CD8-positive, alpha-beta memory T cell (primary cell): ENCODE measurements at regions of chr2 and their contacts with region 1.

Region 1: DNA sequence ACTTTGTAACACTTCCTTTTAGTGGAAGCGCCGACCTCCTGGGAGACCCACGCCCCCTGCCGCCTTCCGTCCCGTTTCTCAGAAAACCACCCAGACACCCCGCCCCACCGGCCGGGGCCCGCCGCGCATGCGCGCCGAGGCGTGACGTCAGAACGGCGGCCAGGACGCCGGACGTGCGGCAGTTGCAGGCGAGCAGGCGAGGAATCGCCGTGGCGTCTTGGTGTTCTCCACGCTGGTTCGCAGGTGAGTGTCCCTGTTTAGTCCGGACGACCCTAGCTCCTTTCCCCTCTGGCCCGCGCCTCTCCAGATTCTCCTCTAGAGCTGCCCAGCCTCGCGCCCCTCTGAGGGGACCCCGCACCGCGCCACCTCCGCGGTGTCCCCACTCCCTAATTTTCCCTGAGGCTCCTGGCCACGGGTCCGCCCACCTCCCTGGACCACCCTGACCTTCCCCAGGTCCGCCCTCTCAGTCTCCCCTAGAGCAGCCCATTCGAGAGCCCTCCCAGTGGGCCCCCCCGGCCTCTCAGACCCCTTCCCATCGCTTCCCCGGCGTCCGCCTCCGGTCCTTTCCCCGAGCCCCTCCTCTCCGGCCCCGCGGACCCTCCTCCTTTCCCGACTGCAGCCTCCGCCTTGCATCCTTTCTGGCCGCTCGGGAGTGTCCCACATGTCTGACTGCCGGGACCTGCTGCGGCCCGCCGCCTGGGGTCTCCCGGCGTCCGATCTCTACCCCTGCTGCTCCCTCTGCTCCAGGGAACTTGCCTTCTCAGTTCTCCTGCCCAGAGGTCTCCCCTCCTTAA is at the start of gene PLEKHB2:
- DNase-seq: peak; percentile 90 to 95 (median 93)
- H3K4me3 ChIP-seq: peak within 1 kb of the TSS; percentile 89
- H3K4me3 Mint-ChIP-seq: peak within 1 kb of the TSS; percentile 85 to 100 (median 96)
- H3K27ac ChIP-seq: peak within 1 kb of the TSS; percentile 94
- H3K27ac Mint-ChIP-seq: peak within 1 kb of the TSS; percentile 81 to 99 (median 98)
- H3K4me1 ChIP-seq: peaks cover 37% of the 10 kb centered on the region
- H3K4me1 Mint-ChIP-seq: peaks cover 47 to 59% (median 57%) of the 10 kb centered on the region in 3 donors
- H3K27me3 ChIP-seq: no peaks in the 10 kb centered on the region
- H3K27me3 Mint-ChIP-seq: peaks cover 0 to 2% of the 10 kb centered on the region in 2 donors
- total RNA-seq, gene PLEKHB2: 47.7 to 48.2 TPM

Region 2: DNA sequence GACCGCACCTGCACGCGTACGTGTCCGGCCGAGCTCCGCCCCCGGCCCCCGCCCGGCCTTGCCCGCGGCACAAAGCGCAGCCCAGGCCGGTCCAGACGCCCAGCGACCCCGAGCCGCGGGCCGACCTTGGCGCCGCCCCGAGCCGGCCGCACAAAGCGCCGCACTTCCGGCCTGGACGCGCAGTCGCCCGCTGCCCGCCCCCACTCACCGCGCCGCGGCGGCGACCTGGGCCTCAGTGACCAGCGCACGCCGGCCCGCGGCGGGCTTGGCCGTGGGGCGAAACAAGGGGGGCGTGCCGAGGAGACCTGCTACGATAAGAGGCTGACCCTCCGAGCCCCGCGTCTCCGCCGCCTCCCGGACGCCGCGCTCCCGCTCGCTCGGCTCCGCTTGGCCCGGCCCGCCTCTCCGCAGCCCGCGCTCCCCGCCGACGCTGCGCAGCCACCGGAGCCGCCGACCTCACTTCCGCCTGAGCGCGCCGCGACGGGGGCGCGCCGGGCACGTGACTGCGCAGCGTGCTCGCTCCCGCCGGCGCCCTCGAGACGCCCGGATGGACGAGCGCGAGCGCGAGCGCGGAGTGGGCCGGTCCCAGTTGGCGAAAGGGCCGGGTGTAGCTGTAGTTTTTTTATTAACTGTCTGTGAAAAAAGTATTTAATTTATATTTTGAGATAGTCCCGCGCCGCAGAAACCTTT is 12.2 kb before region 1 on chr2 and contains the start of gene FAM168B:
- CTCF ChIA-PET with region 1: interaction called, 20 read pairs
- POLR2A ChIA-PET with region 1: interaction called, 38 read pairs
- DNase-seq: peak; percentile 79 to 91 (median 88)
- H3K4me3 ChIP-seq: peak within 1 kb of the TSS; percentile 89
- H3K4me3 Mint-ChIP-seq: peak within 1 kb of the TSS; percentile 90 to 99 (median 94)
- H3K27ac ChIP-seq: peak within 1 kb of the TSS; percentile 89
- H3K27ac Mint-ChIP-seq: peak within 1 kb of the TSS; percentile 81 to 98 (median 96)
- H3K4me1 ChIP-seq: peaks cover 22% of the 10 kb centered on the region
- H3K4me1 Mint-ChIP-seq: peaks cover 20 to 36% (median 34%) of the 10 kb centered on the region in 3 donors
- H3K27me3 ChIP-seq: no peaks in the 10 kb centered on the region
- H3K27me3 Mint-ChIP-seq: peaks cover 0 to 3% of the 10 kb centered on the region in 2 donors
- total RNA-seq, gene FAM168B: 93.1 to 97.6 TPM

Region 3: DNA sequence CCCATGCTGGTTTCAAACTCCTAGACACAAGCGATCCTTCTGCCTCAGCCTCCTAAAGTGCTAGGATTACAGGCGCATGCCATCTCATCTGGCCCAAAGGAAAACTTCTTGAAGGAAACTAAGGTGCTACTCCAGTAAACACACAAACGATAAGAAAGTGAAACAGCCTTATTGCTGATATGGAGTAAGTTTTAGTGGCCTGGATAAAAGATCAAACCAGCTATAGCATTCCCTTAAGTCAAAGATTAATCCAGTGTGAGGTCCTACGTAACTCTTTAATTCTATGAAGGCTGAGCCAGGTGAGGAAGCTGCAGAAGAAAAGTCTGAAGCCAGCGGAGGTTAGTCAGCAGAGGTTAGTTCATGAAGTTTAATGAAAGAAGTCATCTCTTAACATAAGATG is 63.2 kb after region 1 on chr2:
- CTCF ChIA-PET with region 1: no interaction called
- POLR2A ChIA-PET with region 1: no interaction called
- DNase-seq: no peak
- H3K4me3 ChIP-seq: no peak overlapping the region
- H3K4me3 Mint-ChIP-seq: no peak overlapping the region
- H3K27ac ChIP-seq: no peak overlapping the region
- H3K27ac Mint-ChIP-seq: no peak overlapping the region
- H3K4me1 ChIP-seq: no peaks in the 10 kb centered on the region
- H3K4me1 Mint-ChIP-seq: no peaks in the 10 kb centered on the region
- H3K27me3 ChIP-seq: no peaks in the 10 kb centered on the region
- H3K27me3 Mint-ChIP-seq: peaks cover 7 to 9% of the 10 kb centered on the region in 2 donors